MCF 10A (cell line): ENCODE measurements at regions of chr3 and their contacts with region 1.

Region 1: DNA sequence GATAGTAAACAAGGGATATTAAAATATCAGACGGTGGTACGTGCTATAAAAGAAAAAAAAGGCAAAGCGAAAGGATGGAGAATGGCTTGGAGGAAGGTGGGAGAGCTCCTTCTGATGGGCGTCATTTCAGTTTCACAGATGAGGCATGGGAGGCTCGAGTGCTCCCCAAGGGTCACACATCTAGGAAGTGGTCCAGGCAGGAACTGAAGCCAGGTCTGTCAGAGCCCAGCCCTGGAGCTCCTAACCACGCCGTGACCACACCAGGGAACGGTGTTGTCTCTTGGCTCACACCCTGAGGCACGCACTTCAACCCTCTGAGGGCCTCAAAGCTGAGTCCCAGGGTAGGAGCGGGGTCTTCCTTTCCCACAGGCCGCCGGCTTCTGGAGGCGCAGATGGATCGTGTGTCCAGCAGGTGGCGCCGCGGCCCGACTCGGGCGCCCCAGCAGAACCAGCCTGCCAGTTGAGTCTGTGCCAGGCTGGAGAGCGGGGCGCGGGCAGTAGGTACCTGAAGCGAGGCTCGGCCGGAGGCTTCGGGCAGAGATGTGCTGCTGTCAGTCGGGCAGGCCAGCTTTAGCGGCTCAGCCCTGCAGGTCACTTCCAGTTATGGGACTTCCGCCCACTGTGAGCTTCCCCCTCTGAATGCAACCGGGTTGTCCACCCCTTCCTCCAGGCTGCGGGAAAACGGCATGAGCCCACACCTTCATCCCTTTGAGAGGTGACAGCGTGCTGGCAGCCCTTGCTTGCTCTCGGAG is 68.1 kb downstream of the SLC6A1 start:
- DNase-seq: peak; percentile 78
- H3K4me3 Mint-ChIP-seq: no peak overlapping the region
- H3K27ac Mint-ChIP-seq: no peak overlapping the region
- H3K4me1 Mint-ChIP-seq: no peaks in the 10 kb centered on the region
- H3K27me3 Mint-ChIP-seq: peaks cover 18% of the 10 kb centered on the region
- CTCF ChIP-seq: peak; percentile 95

Region 2: GRCh38 chr3:10915376-10915775 is 145.3 kb before region 1 on chr3:
- CTCF ChIA-PET with region 1: no interaction called
- POLR2A ChIA-PET with region 1: no interaction called
- intact Hi-C with region 1: no loop called
- DNase-seq: no peak
- H3K4me3 Mint-ChIP-seq: no peak overlapping the region
- H3K27ac Mint-ChIP-seq: no peak overlapping the region
- H3K4me1 Mint-ChIP-seq: peaks cover 6% of the 10 kb centered on the region
- H3K27me3 Mint-ChIP-seq: no peaks in the 10 kb centered on the region
- CTCF ChIP-seq: no peak

Region 3: DNA sequence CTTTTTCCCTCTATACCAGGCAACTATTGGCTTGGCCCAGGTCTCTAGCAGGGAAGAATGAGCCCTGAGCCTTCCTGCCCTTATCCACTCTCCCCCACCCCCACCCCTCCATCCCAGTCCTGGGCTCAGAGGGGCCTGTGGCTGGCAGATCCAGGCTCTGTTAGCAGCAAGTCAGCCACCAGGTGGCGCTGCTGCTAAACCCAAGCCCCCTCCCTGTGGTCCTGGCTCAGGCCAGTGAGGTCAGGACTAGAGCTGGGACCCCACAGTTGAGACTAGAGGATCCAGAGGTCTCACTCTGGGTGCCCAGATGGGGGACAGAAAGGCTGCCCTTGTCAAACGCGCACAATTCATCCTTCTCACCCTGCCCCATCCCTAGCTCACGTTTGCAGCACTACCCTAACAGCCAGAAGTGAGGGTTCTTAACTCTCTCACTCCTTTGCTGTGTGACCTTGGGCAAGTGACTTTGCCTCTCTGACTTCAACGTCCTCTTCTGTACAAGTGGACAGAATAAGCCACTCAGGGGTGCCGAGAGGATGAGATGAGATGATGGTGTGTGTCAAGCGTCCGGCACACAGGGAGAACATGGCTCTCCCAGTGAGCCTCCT is 114.9 kb before region 1 on chr3:
- CTCF ChIA-PET with region 1: interaction called, 109 read pairs
- POLR2A ChIA-PET with region 1: no interaction called
- intact Hi-C with region 1: loop called (anchors 1 kb)
- DNase-seq: peak; percentile 70
- H3K4me3 Mint-ChIP-seq: no peak overlapping the region
- H3K27ac Mint-ChIP-seq: no peak overlapping the region
- H3K4me1 Mint-ChIP-seq: no peaks in the 10 kb centered on the region
- H3K27me3 Mint-ChIP-seq: peaks cover 22% of the 10 kb centered on the region
- CTCF ChIP-seq: peak; percentile 83

Region 4: DNA sequence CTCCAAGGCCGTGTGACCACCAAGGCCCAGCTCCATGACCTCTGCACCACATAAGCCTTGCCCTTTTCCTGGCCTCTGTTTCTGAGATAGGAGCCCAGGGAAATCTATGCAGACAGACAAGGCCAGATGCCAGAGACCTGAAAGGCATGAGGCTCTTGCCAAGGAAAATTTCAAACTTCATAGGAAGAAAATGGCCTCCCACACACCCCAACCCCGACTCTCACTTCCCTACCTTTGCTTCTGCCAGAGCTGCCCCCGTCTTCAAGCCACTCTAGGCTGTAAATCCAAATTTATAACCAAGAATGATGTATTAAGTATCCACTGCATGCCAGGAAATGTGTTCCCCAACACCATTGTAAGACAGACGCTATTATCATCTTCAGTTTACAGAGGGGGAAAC is 28.2 kb after region 1 on chr3:
- CTCF ChIA-PET with region 1: interaction called, 12 read pairs
- POLR2A ChIA-PET with region 1: no interaction called
- intact Hi-C with region 1: no loop called
- DNase-seq: no peak
- H3K4me3 Mint-ChIP-seq: no peak overlapping the region
- H3K27ac Mint-ChIP-seq: no peak overlapping the region
- H3K4me1 Mint-ChIP-seq: peaks cover 8% of the 10 kb centered on the region
- H3K27me3 Mint-ChIP-seq: no peaks in the 10 kb centered on the region
- CTCF ChIP-seq: no peak

Region 5: GRCh38 chr3:11146771-11147363 is 86.2 kb after region 1 on chr3:
- CTCF ChIA-PET with region 1: interaction called, 66 read pairs
- POLR2A ChIA-PET with region 1: no interaction called
- intact Hi-C with region 1: no loop called
- DNase-seq: no peak
- H3K4me3 Mint-ChIP-seq: no peak overlapping the region
- H3K27ac Mint-ChIP-seq: peak overlapping the region; percentile 9
- H3K4me1 Mint-ChIP-seq: peaks cover 5% of the 10 kb centered on the region
- H3K27me3 Mint-ChIP-seq: no peaks in the 10 kb centered on the region
- CTCF ChIP-seq: no peak

Region 6: GRCh38 chr3:11211531-11212298 is 151.0 kb after region 1 on chr3:
- CTCF ChIA-PET with region 1: interaction called, 25 read pairs
- POLR2A ChIA-PET with region 1: no interaction called
- intact Hi-C with region 1: loop called (anchors 1 kb)
- DNase-seq: peak; percentile 47
- H3K4me3 Mint-ChIP-seq: no peak overlapping the region
- H3K27ac Mint-ChIP-seq: peak overlapping the region; percentile 13
- H3K4me1 Mint-ChIP-seq: peaks cover 39% of the 10 kb centered on the region
- H3K27me3 Mint-ChIP-seq: no peaks in the 10 kb centered on the region
- CTCF ChIP-seq: no peak

Region 7: GRCh38 chr3:11335056-11335608 is 274.5 kb after region 1 on chr3:
- CTCF ChIA-PET with region 1: interaction called, 141 read pairs
- POLR2A ChIA-PET with region 1: no interaction called
- intact Hi-C with region 1: loop called (anchors 1 kb)
- DNase-seq: peak; percentile 77
- H3K4me3 Mint-ChIP-seq: no peak overlapping the region
- H3K27ac Mint-ChIP-seq: no peak overlapping the region
- H3K4me1 Mint-ChIP-seq: no peaks in the 10 kb centered on the region
- H3K27me3 Mint-ChIP-seq: no peaks in the 10 kb centered on the region
- CTCF ChIP-seq: peak; percentile 55